ENCODE measurements at regions of chr14 and their contacts with region 1.

Region 1: DNA sequence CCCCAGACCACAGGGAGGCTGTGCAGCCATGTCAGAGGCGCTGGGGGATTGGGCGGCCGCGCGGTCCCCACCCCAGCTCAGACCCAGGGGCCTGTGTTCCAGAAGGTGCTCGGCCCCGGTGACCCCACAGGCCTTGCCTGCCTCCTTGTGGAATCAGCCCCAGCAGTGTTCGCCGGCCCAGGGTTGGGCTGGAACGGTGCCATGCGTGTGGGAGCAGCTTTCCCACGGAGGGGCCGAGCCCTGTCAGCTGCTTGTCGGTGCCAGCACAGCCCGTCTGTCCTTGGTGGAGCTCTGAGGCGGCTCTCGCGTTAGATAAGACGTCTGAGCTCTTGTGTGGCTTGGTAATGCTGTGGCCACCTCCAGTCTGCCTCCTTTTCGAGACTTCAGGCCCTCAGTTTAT is 8.5 kb downstream of the ZFYVE21 start:
- DNase-seq: peak; percentile 88 to 93
- ATAC-seq: peak; percentile 77
- H3K4me3 ChIP-seq: no peak overlapping the region
- H3K27ac ChIP-seq: peak overlapping the region; percentile 69 to 94
- H3K4me1 ChIP-seq: no peaks in the 10 kb centered on the region
- H3K27me3 ChIP-seq: no peaks in the 10 kb centered on the region

Region 2: DNA sequence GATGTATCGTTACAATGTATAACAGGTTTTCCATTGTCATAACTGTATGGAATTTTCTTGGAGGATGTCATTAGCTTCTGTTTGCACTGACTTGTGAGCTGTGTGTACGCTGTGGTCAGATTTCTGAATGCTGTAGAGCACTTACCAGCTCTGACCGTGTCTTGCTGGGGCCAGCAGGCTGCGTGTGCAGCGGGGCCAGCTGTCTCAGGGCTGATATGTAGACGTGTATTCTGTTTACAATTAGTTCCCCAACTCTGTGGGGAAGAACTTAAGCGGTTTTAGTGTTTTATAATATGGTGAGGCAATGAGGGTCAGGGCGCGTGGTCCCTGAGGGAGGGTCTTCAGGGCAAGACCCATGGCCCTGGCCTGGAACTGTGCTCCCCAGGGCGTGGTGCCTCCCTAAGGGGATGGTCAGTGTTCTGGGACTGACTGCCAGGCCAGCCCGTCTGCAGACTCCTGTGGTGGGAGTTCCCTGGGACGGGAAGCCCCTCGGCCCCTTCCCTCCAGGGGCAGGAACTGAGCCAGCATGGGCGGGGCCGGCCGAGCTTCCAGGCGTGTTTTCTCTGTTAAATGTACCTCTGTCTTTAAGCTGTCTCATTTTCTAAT is 27.5 kb before region 1 on chr14:
- intact Hi-C with region 1: no loop called
- DNase-seq: peak in 1 of 2 donors; percentile 80
- ATAC-seq: peak; percentile 58
- H3K4me3 ChIP-seq: no peak overlapping the region
- H3K27ac ChIP-seq: peak overlapping the region in 1 of 2 donors; percentile 0
- H3K4me1 ChIP-seq: no peaks in the 10 kb centered on the region
- H3K27me3 ChIP-seq: no peaks in the 10 kb centered on the region

Region 3: DNA sequence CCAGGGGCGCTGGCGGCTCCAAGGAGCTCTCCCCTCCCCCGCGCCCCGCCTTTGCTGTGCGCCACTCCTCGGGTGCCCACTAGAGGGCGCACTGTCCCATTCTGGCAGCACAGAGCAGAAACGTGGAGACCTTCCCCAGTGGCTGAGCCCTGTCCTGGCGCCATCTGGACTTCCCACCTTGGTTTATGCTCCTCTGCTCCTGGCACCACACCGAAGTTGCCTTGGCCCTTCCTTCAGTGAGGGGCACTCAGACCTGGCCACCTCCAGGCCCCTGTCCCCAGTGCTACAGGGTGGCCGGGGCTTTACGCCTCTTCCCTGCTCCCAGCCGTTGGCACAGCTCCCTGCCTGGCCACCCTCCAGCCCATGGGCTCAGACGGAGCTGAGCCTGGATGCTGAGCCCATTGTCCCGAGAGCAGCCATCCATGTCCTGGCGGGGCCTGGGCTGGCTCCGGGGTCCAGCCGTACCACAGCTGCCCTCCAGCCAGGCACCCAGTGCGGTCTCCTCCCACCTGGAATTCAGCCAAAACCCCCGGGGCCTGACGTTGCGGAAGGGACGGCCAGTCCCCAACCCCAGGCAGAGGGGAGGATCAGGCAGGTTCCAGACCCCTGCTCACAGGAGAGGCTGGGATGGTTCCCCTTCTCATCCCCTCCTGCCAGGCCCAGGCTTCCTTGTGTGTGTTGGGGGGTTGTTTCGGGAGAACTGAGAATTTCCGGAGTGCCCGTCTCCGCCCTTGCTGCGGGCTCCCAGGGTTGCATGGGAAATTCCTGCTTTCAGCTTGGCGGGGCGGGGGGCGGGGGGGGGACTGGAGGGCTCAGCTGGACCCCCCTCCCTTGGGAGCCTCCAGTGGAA is 1757.1 kb after region 1 on chr14:
- intact Hi-C with region 1: loop called in 1 of 2 experiments (anchors 10 kb)
- DNase-seq: peak; percentile 93 to 97
- ATAC-seq: peak; percentile 82
- H3K4me3 ChIP-seq: peak overlapping the region; percentile 4 to 6
- H3K27ac ChIP-seq: peak overlapping the region; percentile 85 to 86
- H3K4me1 ChIP-seq: peaks cover 0 to 2% of the 10 kb centered on the region in 2 donors
- H3K27me3 ChIP-seq: no peaks in the 10 kb centered on the region